ENCODE measurements at regions of chr4 and their contacts with region 1.

Region 1: DNA sequence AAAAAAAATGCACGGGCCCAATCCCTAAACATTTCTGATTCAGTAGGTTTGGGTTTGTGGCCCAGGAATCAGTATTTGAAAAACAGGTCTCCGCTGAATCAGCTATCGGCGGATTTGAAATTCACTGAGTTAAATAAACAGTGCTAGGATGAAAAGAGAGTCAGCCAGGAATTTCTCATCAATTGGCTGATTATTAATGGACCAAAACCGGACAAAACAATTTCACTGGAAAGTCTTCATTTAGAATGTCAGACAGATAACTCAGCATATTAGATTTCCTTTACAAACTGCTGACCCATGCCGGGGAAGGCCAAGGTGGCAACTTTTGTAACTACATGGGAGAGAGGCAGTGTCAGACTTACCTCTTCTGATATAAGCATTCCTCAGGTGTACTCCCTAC is 99.4 kb upstream of the LSM6 start:
- DNase-seq: no peak
- ATAC-seq: no peak
- H3K4me3 Mint-ChIP-seq: no peak overlapping the region
- H3K27ac Mint-ChIP-seq: no peak overlapping the region
- H3K4me1 Mint-ChIP-seq: no peaks in the 10 kb centered on the region
- H3K27me3 Mint-ChIP-seq: peaks cover 6% of the 10 kb centered on the region

Region 2: GRCh38 chr4:146095091-146095690 is 19.1 kb after region 1 on chr4:
- CTCF ChIA-PET with region 1: interaction called, 13 read pairs
- POLR2A ChIA-PET with region 1: no interaction called
- DNase-seq: peak; percentile 46
- ATAC-seq: no peak
- H3K4me3 Mint-ChIP-seq: no peak overlapping the region
- H3K27ac Mint-ChIP-seq: no peak overlapping the region
- H3K4me1 Mint-ChIP-seq: no peaks in the 10 kb centered on the region
- H3K27me3 Mint-ChIP-seq: peaks cover 8% of the 10 kb centered on the region